ENCODE measurements at regions of chr1 and their contacts with region 1.

Region 1: DNA sequence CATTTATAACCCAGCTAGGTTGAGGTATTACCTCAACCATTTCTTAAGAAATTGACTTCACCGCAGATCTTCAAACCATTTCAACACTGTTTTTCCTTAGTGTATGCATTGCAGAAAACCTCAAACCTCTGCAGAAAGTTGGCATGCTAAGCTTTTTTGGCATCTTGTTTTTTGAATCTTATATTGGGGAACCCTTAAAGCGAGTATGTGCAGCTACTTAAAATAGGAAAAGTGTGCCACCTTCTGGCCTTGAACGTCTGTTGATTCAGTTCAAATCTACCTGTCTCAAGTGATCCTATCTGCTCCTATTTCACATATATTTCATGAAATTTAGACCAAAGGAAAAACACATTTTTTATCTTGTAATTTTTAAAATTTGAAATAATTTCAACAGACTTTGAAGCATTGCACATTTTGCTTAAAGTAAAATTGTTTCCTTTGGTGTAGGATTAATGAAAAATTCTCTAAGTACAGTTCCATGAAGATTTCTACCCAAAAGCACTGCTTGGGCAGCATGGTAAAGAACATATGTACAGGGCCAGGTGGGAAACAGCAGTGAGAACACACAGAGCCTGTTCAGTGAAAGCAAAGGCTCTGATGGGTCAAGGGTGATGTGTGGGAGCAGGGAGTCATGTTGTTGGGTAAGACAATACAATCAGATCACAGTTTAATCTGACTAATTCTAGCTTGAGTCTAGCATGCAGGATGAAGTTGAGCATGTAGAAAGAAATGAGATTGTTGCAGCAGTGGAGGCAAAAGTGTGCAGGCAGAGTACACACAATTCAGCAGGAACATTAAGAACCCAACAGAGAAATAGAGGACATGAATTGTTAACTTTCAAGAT is 17.2 kb downstream of the HENMT1 start:
- DNase-seq: peak; percentile 81 to 90 (median 89)
- H3K4me3 ChIP-seq: no peak overlapping the region
- H3K27ac ChIP-seq: no peak overlapping the region
- H3K4me1 ChIP-seq: peaks cover 31 to 54% (median 45%) of the 10 kb centered on the region in 4 experiments
- H3K27me3 ChIP-seq: no peaks in the 10 kb centered on the region

Region 2: DNA sequence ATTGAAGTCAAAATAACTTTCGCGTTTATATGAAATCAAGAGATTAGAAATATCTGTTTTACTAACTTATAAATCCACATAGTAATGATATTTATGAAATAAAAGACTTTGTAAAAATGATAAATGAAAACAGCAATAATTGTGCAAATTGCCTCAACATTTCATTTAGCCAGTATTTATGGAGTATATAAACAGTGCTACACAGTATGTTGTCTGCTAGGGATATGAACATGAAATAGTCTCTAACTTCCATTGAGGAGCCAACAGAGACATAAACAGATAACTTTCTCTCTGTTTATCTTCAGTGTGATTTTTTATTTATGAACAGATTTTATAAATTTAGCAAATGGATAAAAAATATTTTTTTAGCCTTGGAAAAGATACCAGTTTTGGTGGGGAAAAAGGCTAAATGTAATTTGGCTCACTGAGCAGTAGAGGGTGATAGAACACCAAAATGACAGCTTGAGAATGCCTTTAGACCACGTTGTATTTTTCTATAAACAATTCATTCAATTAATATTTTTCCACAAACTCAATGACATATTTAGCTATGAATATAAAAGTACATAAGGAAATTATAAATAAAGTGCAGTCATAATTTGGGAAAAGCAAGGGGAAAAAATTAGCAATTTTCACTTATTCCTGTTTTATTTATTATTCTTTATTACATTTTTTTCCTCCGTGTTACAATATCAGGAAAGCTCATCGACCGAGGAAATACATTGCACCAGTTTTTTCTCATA is 131.3 kb before region 1 on chr1:
- CTCF ChIA-PET with region 1: interaction called, 72 read pairs
- POLR2A ChIA-PET with region 1: no interaction called
- DNase-seq: peak; percentile 51 to 74 (median 62)
- H3K4me3 ChIP-seq: no peak overlapping the region
- H3K27ac ChIP-seq: no peak overlapping the region
- H3K4me1 ChIP-seq: no peaks in the 10 kb centered on the region
- H3K27me3 ChIP-seq: peaks cover 0 to 10% (median 5%) of the 10 kb centered on the region in 5 experiments

Region 3: DNA sequence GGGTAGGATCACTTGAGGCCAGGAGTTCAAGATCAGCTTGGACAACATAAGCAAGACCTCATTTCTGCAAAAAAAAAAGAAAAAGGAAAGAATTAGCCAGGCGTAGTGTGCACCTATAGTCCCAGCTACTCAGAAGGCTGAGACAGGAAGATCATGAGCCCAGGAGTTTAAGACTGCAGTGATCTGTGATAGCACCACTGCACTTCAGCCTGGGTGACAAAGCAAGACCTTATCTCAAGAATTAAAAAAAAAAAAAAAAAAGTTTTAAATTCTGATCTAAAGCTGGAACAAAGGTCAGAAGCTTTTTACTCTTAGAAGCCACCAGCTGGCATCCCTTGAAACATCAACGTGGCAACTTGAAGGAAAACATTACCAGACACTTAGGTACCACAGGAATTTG is 28.2 kb before region 1 on chr1:
- CTCF ChIA-PET with region 1: interaction called, 18 read pairs
- POLR2A ChIA-PET with region 1: no interaction called
- DNase-seq: no peak
- H3K4me3 ChIP-seq: no peak overlapping the region
- H3K27ac ChIP-seq: no peak overlapping the region
- H3K4me1 ChIP-seq: no peaks in the 10 kb centered on the region
- H3K27me3 ChIP-seq: no peaks in the 10 kb centered on the region

Region 4: GRCh38 chr1:108627951-108628350 is 15.8 kb before region 1 on chr1:
- CTCF ChIA-PET with region 1: interaction called, 19 read pairs
- POLR2A ChIA-PET with region 1: no interaction called
- DNase-seq: no peak
- H3K4me3 ChIP-seq: no peak overlapping the region
- H3K27ac ChIP-seq: no peak overlapping the region
- H3K4me1 ChIP-seq: no peaks in the 10 kb centered on the region
- H3K27me3 ChIP-seq: no peaks in the 10 kb centered on the region

Region 5: GRCh38 chr1:108661030-108661620 is 17.4 kb after region 1 on chr1 and contains the start of gene HENMT1:
- CTCF ChIA-PET with region 1: interaction called, 9 read pairs
- POLR2A ChIA-PET with region 1: interaction called, 26 read pairs
- DNase-seq: peak; percentile 91 to 95 (median 94)
- H3K4me3 ChIP-seq: peak within 1 kb of the TSS; percentile 35 to 80 (median 63)
- H3K27ac ChIP-seq: peak within 1 kb of the TSS; percentile 89 to 94
- H3K4me1 ChIP-seq: peaks cover 17 to 58% (median 32%) of the 10 kb centered on the region in 4 experiments
- H3K27me3 ChIP-seq: no peaks in the 10 kb centered on the region

Region 6: DNA sequence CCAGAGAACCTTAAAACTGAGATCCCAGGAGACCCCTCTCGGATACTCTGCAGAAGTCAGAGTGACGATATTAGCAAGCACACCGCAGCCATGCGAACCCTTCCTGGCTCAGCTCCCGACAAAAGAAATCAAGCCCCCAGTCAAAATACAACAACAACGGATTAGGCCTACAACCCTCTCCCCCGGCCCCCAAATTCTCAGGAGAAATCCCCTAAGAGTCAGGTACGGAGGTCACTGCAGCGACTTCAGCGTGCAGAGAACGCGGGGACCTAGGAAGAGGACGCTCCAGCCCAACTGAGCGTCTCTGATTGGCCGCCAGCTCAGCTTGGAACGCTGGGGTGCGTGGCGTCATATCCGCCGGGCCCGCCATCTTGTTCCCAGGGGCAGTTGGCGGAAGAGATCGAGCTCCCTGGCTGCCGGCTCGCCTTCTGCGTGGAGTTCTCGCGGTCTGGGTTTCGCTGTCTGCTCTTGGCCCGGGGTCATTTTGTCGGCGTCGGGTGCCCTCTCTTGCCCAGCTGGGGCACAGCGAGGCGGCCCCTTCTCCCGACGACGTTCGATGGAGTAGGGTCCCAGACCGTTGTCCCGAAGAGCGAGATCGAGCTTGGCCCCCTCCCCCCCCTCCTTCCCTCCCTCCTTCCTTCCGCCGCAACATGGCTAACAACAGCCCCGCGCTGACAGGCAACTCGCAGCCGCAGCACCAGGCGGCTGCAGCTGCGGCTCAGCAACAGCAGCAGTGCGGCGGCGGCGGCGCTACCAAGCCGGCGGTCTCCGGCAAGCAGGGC is 48.4 kb after region 1 on chr1 and contains the start of gene PRPF38B:
- CTCF ChIA-PET with region 1: interaction called, 25 read pairs
- POLR2A ChIA-PET with region 1: interaction called, 17 read pairs
- DNase-seq: peak; percentile 94 to 98 (median 97)
- H3K4me3 ChIP-seq: peak within 1 kb of the TSS; percentile 76 to 99 (median 88)
- H3K27ac ChIP-seq: peak within 1 kb of the TSS; percentile 91 to 98
- H3K4me1 ChIP-seq: peaks cover 9 to 49% (median 33%) of the 10 kb centered on the region in 4 experiments
- H3K27me3 ChIP-seq: no peaks in the 10 kb centered on the region

Measured in common myeloid progenitor, CD34-positive (primary cell).